ENCODE measurements at regions of chr19 and their contacts with region 1.

Region 1: GRCh38 chr19:39125554-39126311 is at the start of gene PAK4:
- DNase-seq: peak; percentile 92 to 97 (median 96)
- ATAC-seq: peak; percentile 92
- H3K4me3 ChIP-seq: peak within 1 kb of the TSS; percentile 72 to 91
- H3K4me3 Mint-ChIP-seq: peak within 1 kb of the TSS; percentile 99
- H3K27ac ChIP-seq: peak within 1 kb of the TSS; percentile 64 to 84
- H3K27ac Mint-ChIP-seq: peak within 1 kb of the TSS; percentile 97
- H3K4me1 ChIP-seq: peaks cover 7% of the 10 kb centered on the region
- H3K4me1 Mint-ChIP-seq: peaks cover 41% of the 10 kb centered on the region
- H3K27me3 ChIP-seq: no peaks in the 10 kb centered on the region
- H3K27me3 Mint-ChIP-seq: peaks cover 4% of the 10 kb centered on the region
- CTCF ChIP-seq: no peak
- total RNA-seq, gene PAK4: 6.4 to 7.8 TPM

Region 2: DNA sequence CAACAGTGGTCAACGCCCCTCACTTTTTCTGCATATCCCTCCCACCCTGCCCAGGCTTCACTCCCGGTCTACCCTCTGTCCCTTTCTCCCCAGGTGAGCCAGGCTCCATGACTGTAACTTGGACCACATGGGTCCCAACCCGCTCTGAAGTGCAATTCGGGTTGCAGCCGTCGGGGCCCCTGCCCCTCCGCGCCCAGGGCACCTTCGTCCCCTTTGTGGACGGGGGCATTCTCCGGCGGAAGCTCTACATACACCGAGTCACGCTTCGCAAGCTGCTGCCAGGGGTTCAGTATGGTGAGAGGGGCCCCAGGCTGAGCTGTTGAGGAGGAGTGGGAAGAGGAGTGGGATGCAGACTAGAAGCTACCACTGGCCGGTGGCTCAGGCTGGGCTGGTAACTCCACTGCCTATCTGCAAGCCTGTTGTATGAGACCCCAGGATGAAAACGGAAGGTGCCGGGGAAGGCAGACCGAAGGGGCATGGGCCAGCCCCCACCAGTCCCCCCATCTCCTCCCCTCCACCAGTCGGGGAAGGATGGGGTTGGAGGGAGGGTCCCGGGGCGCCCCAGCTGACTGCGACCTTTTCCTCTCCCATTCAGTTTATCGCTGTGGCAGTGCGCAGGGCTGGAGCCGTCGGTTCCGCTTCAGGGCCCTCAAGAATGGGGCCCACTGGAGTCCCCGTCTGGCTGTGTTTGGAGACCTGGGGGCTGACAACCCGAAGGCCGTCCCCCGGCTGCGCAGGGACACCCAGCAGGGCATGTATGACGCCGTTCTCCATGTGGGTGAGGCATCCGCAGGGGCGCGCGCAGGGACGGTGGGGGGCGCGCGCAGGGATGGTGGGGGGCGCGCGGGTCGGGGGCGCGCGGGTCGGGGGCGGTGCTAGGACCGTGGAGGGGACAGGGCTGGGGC is 27.1 kb before region 1 on chr19:
- CTCF ChIA-PET with region 1: no interaction called
- POLR2A ChIA-PET with region 1: no interaction called
- intact Hi-C with region 1: no loop called
- DNase-seq: no peak
- ATAC-seq: no peak
- H3K4me3 ChIP-seq: no peak overlapping the region
- H3K4me3 Mint-ChIP-seq: no peak overlapping the region
- H3K27ac ChIP-seq: no peak overlapping the region
- H3K27ac Mint-ChIP-seq: no peak overlapping the region
- H3K4me1 ChIP-seq: no peaks in the 10 kb centered on the region
- H3K4me1 Mint-ChIP-seq: peaks cover 2% of the 10 kb centered on the region
- H3K27me3 ChIP-seq: peaks cover 0 to 4% of the 10 kb centered on the region in 2 experiments
- H3K27me3 Mint-ChIP-seq: peaks cover 37% of the 10 kb centered on the region
- CTCF ChIP-seq: no peak

Region 3: DNA sequence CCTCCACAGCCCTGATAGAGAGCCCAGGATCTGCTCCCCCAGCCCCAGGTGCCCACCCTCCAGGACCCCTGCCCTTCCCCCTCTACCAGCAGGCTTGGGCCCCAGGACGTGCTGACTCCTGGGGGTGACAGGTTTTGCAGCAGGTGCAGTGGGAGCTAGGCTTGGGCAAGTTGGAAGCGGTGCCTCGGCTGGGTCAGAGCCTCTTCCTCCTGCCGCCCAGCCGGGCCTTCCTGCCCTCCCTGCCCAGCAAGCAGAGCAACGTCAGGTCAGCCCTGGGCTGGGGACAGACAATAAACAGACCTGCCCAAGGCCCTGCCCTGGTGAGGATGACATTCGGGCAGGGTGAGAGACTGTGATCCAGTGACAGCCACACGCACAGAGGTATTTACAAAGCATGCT is 61.8 kb after region 1 on chr19:
- CTCF ChIA-PET with region 1: interaction called, 12 read pairs
- POLR2A ChIA-PET with region 1: no interaction called
- intact Hi-C with region 1: loop called (anchors 1 kb)
- DNase-seq: no peak
- ATAC-seq: no peak
- H3K4me3 ChIP-seq: no peak overlapping the region
- H3K4me3 Mint-ChIP-seq: no peak overlapping the region
- H3K27ac ChIP-seq: no peak overlapping the region
- H3K27ac Mint-ChIP-seq: no peak overlapping the region
- H3K4me1 ChIP-seq: no peaks in the 10 kb centered on the region
- H3K4me1 Mint-ChIP-seq: no peaks in the 10 kb centered on the region
- H3K27me3 ChIP-seq: peaks cover 0 to 6% of the 10 kb centered on the region in 2 experiments
- H3K27me3 Mint-ChIP-seq: peaks cover 20% of the 10 kb centered on the region
- CTCF ChIP-seq: no peak

Region 4: GRCh38 chr19:39197823-39198208 is 72.1 kb after region 1 on chr19:
- CTCF ChIA-PET with region 1: no interaction called
- POLR2A ChIA-PET with region 1: no interaction called
- intact Hi-C with region 1: no loop called
- DNase-seq: no peak
- ATAC-seq: no peak
- H3K4me3 ChIP-seq: no peak overlapping the region
- H3K4me3 Mint-ChIP-seq: no peak overlapping the region
- H3K27ac ChIP-seq: no peak overlapping the region
- H3K27ac Mint-ChIP-seq: no peak overlapping the region
- H3K4me1 ChIP-seq: peaks cover 20% of the 10 kb centered on the region
- H3K4me1 Mint-ChIP-seq: peaks cover 26% of the 10 kb centered on the region
- H3K27me3 ChIP-seq: peaks cover 10 to 23% of the 10 kb centered on the region in 2 experiments
- H3K27me3 Mint-ChIP-seq: peaks cover 62% of the 10 kb centered on the region
- CTCF ChIP-seq: no peak

Region 5: DNA sequence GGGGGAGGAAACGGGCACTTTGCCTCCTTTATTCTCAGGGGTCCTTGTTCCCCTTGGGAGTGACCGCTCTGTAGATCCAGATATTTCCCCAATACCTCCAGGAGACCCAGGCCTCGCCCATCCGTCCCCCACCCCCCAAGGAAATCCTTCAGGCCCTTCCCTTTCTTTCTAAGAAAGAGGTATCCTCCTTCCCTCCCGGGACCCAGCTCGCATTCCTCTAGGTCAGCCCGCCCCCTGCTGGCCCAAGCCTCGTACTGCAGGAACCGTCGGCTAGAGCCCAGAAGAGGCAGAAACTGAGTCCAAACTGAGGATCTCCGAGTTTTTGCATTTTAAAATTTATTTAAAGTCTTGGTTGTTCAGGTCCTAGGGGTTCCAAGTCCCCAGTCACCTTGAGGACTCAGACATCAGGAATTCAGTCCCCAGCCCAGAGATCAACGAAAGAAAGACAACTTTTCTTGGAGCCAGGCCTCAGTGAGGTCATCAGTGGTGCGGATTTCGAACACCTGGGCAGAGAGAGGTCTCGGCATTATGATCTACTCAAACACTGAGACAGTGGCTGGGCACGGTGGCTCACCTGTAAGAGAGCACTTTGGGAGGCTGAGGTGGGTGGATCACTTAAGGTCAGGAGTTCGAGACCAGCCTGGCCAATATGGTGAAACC is 202.4 kb after region 1 on chr19:
- CTCF ChIA-PET with region 1: interaction called, 21 read pairs
- POLR2A ChIA-PET with region 1: no interaction called
- intact Hi-C with region 1: loop called (anchors 1 kb)
- DNase-seq: peak; percentile 71 to 90 (median 81)
- ATAC-seq: peak; percentile 93
- H3K4me3 ChIP-seq: no peak overlapping the region
- H3K4me3 Mint-ChIP-seq: peak overlapping the region; percentile 47
- H3K27ac ChIP-seq: no peak overlapping the region
- H3K27ac Mint-ChIP-seq: peak overlapping the region; percentile 71
- H3K4me1 ChIP-seq: peaks cover 52% of the 10 kb centered on the region
- H3K4me1 Mint-ChIP-seq: peaks cover 49% of the 10 kb centered on the region
- H3K27me3 ChIP-seq: no peaks in the 10 kb centered on the region
- H3K27me3 Mint-ChIP-seq: no peaks in the 10 kb centered on the region
- CTCF ChIP-seq: peak; percentile 96

Region 6: DNA sequence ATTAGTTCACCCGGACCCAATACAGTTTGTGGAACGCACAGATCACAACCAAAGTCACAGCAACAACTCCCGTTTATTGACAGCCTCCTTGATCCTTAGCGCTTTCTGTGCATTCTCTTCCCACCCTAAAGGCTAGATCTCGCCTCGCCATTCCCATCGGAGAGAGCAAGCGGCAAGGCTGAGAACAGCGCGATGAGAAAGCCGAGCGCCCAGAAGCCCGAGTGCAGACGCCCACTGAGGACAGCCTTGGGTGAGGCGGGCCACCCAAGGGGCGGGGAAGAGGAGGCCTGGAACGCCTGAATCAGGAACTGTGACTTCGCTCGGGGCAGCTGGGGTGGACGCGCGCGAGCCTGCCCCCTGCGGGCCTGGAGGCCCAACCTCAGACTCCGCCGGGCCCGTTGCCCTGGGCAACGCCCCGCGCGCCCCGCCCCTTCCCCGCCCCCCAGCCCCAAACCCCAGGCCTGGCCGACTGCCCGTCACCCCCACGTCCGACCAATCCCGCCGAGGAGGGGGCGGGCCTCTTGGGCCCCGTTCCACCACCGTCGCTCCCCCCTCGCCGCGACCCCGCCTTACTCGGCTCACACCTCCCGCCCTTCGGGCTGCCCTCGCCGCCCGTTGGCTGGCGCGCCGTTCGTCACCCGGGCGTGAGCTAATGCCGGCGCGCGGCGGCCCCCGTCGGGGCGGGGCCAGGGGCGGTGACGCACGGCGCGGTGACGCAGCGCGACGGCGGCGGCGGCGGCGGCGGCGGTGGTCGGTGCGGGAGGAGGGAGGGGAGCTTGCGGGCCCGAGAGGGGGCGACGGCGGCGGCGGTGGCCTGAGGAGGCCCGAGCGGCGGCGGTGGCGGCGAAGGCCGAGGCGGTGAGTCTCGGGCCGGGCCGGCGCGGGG is 216.2 kb after region 1 on chr19 and contains the start of gene SAMD4B:
- CTCF ChIA-PET with region 1: no interaction called
- POLR2A ChIA-PET with region 1: no interaction called
- intact Hi-C with region 1: loop called (anchors 1 to 5 kb)
- DNase-seq: peak; percentile 98 to 100 (median 99)
- ATAC-seq: peak; percentile 90
- H3K4me3 ChIP-seq: peak within 1 kb of the TSS; percentile 93 to 97
- H3K4me3 Mint-ChIP-seq: peak within 1 kb of the TSS; percentile 100
- H3K27ac ChIP-seq: peak within 1 kb of the TSS; percentile 67 to 88
- H3K27ac Mint-ChIP-seq: peak within 1 kb of the TSS; percentile 98
- H3K4me1 ChIP-seq: peaks cover 29% of the 10 kb centered on the region
- H3K4me1 Mint-ChIP-seq: peaks cover 69% of the 10 kb centered on the region
- H3K27me3 ChIP-seq: no peaks in the 10 kb centered on the region
- H3K27me3 Mint-ChIP-seq: no peaks in the 10 kb centered on the region
- CTCF ChIP-seq: peak; percentile 73
- total RNA-seq, gene SAMD4B: 68.3 to 78.1 TPM

Region 7: GRCh38 chr19:39412100-39412866 is 286.6 kb after region 1 on chr19 and contains the start of gene PLEKHG2:
- CTCF ChIA-PET with region 1: no interaction called
- POLR2A ChIA-PET with region 1: interaction called, 4 read pairs
- intact Hi-C with region 1: loop called in 1 of 2 experiments (anchors 10 kb)
- DNase-seq: peak; percentile 95 to 99 (median 97)
- ATAC-seq: peak; percentile 57
- H3K4me3 ChIP-seq: peak within 1 kb of the TSS; percentile 95
- H3K4me3 Mint-ChIP-seq: peak within 1 kb of the TSS; percentile 89
- H3K27ac ChIP-seq: peak within 1 kb of the TSS; percentile 94 to 100
- H3K27ac Mint-ChIP-seq: peak within 1 kb of the TSS; percentile 96
- H3K4me1 ChIP-seq: peaks cover 26% of the 10 kb centered on the region
- H3K4me1 Mint-ChIP-seq: peaks cover 33% of the 10 kb centered on the region
- H3K27me3 ChIP-seq: no peaks in the 10 kb centered on the region
- H3K27me3 Mint-ChIP-seq: no peaks in the 10 kb centered on the region
- CTCF ChIP-seq: peak; percentile 84
- total RNA-seq, gene PLEKHG2: 54.8 to 69.0 TPM

Region 8: GRCh38 chr19:39539519-39540332 is 414.0 kb after region 1 on chr19 and contains the start of gene EID2:
- CTCF ChIA-PET with region 1: interaction called, 3 read pairs
- POLR2A ChIA-PET with region 1: no interaction called
- intact Hi-C with region 1: loop called in 1 of 2 experiments (anchors 5 kb)
- DNase-seq: peak; percentile 84 to 97 (median 95)
- ATAC-seq: peak; percentile 91
- H3K4me3 ChIP-seq: peak within 1 kb of the TSS; percentile 81 to 95
- H3K4me3 Mint-ChIP-seq: peak within 1 kb of the TSS; percentile 97
- H3K27ac ChIP-seq: peak within 1 kb of the TSS; percentile 90 to 93
- H3K27ac Mint-ChIP-seq: peak within 1 kb of the TSS; percentile 98
- H3K4me1 ChIP-seq: peaks cover 31% of the 10 kb centered on the region
- H3K4me1 Mint-ChIP-seq: peaks cover 58% of the 10 kb centered on the region
- H3K27me3 ChIP-seq: no peaks in the 10 kb centered on the region
- H3K27me3 Mint-ChIP-seq: no peaks in the 10 kb centered on the region
- CTCF ChIP-seq: peak; percentile 74
- total RNA-seq, gene EID2: 16.3 to 17.7 TPM

Measured in CD8-positive, alpha-beta T cell (primary cell).